Sciatic nerve (tissue), 2 donors: ENCODE measurements at regions of chr7 and their contacts with region 1.

Region 1: DNA sequence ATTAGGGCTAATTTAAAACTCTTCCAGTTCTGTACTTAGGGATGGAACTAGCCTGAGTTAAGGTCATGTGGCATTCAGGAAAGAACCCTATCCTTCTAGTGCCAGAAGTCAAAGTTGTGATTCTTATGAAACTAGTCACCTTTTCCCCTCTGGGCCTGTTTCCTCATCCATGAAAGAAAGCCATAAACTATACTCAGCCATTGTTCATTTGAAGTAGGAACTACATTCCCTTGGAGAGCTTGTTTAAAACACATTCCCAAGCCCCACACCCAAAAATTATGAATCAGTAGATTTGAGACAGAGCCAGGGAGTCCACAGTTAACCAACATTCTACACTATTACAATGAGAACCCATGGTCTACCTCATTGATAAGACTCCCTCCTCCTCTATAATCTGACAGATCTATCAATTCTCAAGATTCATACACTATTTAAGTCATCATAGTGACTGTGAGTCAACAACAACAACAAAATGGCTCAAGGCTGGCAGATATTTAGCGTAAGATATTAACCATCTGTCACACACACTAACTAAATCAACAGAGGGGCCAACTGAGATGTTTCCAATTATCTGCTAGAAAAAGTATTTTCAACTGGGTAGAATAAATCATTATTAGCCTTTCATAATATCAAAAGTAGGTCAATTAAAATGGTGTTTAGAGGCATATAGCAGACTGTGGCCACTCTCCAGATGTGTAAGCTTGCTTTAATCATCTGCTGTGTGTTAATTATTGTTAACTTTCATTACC is 102.3 kb downstream of the SLC25A13 start:
- DNase-seq: no peak
- ATAC-seq: peak; percentile 64

Region 2: DNA sequence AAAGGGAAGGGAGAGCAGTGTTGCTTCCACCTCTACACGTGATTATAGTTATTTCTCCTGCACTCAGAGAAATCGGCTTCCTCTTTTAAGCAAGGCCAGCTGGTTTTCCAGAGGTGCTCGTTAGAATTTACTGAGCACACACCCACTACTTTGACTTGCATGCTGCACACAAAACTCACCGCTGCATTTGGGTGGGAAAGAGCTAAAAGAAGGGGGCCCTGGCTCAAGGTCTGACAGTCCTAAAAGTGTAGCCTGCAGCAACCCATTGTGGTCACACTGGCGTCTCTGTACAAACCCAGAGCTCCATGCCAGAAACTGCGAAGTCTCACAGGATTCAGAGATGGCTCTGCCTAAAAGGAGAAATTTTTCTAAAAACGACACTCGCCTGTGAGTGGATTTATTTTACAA is 31.4 kb before region 1 on chr7:
- intact Hi-C with region 1: no loop called
- DNase-seq: no peak
- ATAC-seq: peak; percentile 71

Region 3: GRCh38 chr7:96236198-96237039 is 16.9 kb after region 1 on chr7:
- intact Hi-C with region 1: no loop called
- DNase-seq: no peak
- ATAC-seq: peak; percentile 88

Region 4: DNA sequence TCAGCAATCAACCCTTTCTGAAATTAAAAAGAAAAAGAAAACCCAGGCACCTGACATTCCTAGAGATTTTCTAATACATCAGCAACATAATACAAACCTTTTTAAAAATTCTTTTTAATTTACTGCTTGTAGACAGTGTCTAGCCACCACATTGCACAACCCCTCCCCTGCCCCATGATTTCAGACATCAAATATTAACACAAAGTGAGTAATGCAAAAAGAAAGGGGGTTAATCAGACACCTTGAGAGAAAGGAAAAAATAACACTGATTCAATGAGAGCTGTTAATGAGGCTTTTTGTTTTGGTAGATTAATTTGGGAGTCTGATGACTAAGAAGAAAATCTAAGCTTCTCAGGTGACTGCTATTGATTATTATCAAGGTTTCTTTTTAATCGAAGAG is 47.0 kb after region 1 on chr7:
- intact Hi-C with region 1: loop called (anchors 2 kb)
- DNase-seq: no peak
- ATAC-seq: no peak

Region 5: DNA sequence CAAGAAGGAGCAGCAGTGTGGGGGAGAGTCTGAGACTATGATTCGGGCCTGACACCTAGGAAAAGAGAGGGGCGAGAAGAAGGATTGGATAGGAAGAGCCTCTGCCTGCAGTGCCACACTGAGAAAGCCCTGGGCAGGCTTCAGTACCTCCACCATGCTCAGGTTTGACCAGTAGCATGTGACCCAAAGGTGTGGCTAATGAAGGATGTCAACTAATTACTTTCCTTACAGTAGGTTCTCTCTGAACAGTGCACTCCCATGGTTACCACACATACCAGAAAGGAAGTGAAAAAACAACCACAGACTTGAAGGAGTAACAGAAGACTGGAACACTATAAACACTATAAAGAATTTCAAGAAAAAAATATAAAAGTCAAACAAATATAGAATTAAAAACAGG is 443.9 kb after region 1 on chr7:
- intact Hi-C with region 1: no loop called
- DNase-seq: no peak
- ATAC-seq: no peak